Mammary epithelial cell (primary cell): ENCODE measurements at regions of chr11 and their contacts with region 1.

Region 1: DNA sequence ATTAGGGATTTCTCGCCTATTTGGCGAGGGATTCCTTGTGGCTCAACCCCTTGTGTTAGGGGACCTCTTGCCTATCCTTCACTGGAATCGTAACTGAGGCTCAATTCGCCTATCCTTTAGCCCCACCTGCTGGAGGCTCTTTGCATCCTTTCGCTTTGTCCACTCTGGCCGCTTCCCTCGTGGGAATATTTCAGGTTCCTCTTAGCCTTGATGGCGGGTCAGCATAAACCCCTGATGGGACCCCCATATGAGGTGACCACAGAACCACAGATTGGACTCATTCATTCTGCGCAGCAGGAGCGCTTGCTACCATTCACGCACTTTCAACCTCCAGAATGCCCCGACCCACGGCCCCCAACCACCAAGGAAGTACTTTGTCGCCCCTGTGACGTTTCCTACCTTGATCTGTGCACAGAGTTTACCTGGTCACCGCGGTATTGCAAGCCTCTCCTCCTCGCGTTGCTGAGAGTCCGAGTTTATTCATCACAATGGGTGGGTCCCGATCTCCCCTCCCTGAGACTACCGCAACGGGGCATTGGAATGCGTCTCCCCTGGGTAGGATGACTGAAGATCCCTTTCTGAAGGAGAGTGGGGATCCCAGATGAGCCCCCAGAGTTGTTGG is at the start of gene OR52N2:
- DNase-seq: peak; percentile 51
- H3K4me3 ChIP-seq: peak within 1 kb of the TSS; percentile 37 to 48 (median 46)
- H3K27ac ChIP-seq: no peak within 1 kb of the TSS
- H3K4me1 ChIP-seq: no peaks in the 10 kb centered on the region
- H3K27me3 ChIP-seq: peaks cover 4% of the 10 kb centered on the region
- CTCF ChIP-seq: peak; percentile 77 to 80
- total RNA-seq, gene OR52N2: not detected

Region 2: DNA sequence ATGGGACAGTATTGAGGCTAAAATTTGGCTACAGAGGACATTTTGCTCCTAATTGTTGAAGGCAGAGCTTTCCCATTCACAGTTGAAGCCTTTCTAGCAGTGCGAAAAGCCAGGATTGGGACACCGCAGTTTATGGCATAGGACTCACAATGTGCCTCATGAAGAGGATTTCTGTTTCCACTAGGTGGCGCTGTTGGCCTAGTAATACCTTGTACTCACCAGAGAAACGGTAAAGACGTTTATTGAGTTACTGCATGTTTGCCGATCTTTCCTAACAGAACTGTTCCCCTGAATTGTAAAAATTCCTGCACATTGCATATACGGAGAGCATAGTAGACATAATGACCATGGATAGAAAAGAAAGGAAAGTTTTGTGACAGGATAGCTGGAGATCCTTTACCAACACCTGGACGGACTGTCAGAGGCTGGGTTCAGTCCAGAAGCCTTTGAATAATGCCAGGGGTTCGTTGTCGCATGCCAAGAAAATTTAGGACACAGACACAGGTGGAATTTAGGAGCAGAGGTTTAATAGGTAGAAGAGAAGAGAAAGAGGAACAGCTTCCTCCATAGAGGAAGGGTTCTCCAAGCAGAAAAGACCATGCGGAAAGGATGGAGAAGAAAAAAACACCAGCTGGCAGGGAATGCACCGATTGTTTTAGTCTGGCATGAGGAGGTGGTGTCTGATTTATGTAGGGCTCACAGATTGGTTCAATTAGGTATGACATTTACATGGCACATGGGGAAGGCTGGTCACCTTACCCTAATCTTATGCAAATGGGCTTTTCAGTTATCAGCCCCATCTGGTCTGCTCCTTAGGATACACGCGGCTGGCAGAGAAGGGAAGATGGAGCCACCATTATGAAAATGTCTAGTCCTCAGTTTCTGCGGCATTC is 1182.2 kb before region 1 on chr11:
- CTCF ChIA-PET with region 1: no interaction called
- dilution Hi-C with region 1: no loop called
- in situ Hi-C with region 1: no loop called
- intact Hi-C with region 1: loop called (anchors 2 kb)
- DNase-seq: peak; percentile 63
- H3K4me3 ChIP-seq: no peak overlapping the region
- H3K27ac ChIP-seq: no peak overlapping the region
- H3K4me1 ChIP-seq: no peaks in the 10 kb centered on the region
- H3K27me3 ChIP-seq: no peaks in the 10 kb centered on the region
- CTCF ChIP-seq: peak; percentile 70 to 79

Region 3: GRCh38 chr11:5204787-5205186 is 603.8 kb before region 1 on chr11:
- CTCF ChIA-PET with region 1: no interaction called
- dilution Hi-C with region 1: no loop called
- in situ Hi-C with region 1: no loop called
- intact Hi-C with region 1: loop called (anchors 1 kb)
- DNase-seq: peak; percentile 58
- H3K4me3 ChIP-seq: no peak overlapping the region
- H3K27ac ChIP-seq: no peak overlapping the region
- H3K4me1 ChIP-seq: no peaks in the 10 kb centered on the region
- H3K27me3 ChIP-seq: no peaks in the 10 kb centered on the region
- CTCF ChIP-seq: peak; percentile 66 to 67

Region 4: DNA sequence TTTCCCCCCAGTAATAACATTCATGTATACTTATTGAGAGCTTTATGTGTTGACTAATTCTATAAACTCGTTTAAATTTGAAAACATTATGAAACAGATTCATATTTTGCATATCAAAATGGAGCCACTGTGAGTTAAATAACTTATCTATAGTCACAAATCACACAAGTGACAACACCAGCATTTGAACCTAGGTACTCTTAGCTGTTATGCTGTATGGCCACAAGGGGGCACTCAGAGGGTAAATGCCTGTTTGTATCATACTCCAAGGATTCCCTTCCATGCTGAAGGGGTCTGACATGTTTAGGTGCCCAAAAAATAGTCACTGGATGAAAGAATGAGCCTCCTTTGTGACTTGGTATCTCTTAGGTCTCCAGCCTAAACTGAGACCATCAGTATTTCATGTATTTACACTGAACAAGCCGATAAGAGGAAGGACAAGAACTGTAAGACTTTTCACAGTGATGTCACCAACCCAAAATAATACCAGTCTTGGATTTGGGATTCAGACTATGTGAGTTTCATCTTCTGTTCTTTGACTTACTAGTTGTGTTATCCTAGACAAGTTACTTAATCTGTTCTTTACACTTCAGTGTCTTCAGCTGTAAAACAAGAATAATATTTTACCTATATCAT is 332.3 kb before region 1 on chr11:
- CTCF ChIA-PET with region 1: no interaction called
- dilution Hi-C with region 1: no loop called
- in situ Hi-C with region 1: no loop called
- intact Hi-C with region 1: loop called (anchors 1 kb)
- DNase-seq: peak; percentile 27
- H3K4me3 ChIP-seq: no peak overlapping the region
- H3K27ac ChIP-seq: no peak overlapping the region
- H3K4me1 ChIP-seq: no peaks in the 10 kb centered on the region
- H3K27me3 ChIP-seq: peaks cover 3% of the 10 kb centered on the region
- CTCF ChIP-seq: peak; percentile 86 to 89

Region 5: DNA sequence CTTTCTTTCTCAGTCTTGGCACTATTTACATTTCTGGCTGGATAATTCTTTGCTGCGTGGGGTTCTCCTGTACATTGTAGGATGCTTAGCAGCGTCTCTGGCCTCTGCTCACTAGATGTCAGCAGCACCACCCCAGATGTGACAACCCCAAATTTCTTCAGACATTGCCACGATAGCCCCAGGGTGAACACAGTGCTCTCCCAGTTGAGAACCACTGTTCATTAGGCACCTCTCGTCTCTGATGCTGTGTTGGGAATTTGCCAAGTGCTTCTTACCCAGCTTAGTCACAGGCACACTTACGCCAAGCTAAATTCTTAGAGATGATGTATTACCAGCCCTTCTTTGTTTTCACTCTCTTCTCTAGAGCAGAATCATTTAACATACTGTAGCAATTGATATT is 202.8 kb before region 1 on chr11:
- CTCF ChIA-PET with region 1: no interaction called
- dilution Hi-C with region 1: no loop called
- in situ Hi-C with region 1: no loop called
- intact Hi-C with region 1: loop called (anchors 1 kb)
- DNase-seq: peak; percentile 85
- H3K4me3 ChIP-seq: no peak overlapping the region
- H3K27ac ChIP-seq: no peak overlapping the region
- H3K4me1 ChIP-seq: no peaks in the 10 kb centered on the region
- H3K27me3 ChIP-seq: no peaks in the 10 kb centered on the region
- CTCF ChIP-seq: peak in 1 of 2 donors; percentile 51

Region 6: DNA sequence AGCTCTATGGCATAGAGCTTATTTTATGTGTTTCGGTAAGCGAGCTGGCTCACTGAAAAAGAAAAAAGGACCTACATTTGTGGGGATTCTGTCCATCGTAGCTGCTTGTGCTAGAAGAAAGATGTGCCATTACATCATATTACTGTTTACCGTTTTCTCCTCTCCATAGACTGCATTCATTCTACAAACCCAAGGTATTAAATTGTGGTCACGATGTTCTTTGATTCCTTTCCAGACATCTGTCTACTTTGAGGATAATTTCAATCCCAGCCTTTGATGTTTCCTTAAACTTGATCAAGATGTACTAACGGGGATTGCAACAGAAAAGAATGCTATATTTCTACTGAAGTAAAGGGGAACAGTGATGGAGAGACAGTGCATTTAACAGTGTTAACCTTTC is 12.1 kb before region 1 on chr11:
- CTCF ChIA-PET with region 1: no interaction called
- dilution Hi-C with region 1: no loop called
- in situ Hi-C with region 1: no loop called
- intact Hi-C with region 1: no loop called
- DNase-seq: no peak
- H3K4me3 ChIP-seq: no peak overlapping the region
- H3K27ac ChIP-seq: no peak overlapping the region
- H3K4me1 ChIP-seq: no peaks in the 10 kb centered on the region
- H3K27me3 ChIP-seq: no peaks in the 10 kb centered on the region
- CTCF ChIP-seq: no peak

Region 7: DNA sequence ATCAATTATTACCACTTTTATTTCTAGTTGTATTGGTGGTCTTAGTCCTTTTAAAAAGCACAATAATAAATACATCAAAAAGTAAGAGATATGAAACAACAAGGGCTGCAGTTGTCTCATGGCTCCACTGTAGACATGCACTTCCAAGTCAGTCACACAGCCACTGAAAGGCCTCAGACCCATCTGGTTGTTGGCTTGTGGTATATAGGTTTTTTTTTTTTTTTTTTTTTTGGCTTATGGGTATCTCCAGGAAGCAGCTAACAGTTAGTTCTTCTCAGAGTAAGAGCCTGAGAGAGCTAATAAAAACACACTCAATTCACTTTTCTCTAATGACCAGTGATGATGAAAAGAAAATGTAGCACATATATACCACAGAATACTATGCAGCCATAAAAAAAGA is 39.1 kb after region 1 on chr11:
- CTCF ChIA-PET with region 1: no interaction called
- dilution Hi-C with region 1: no loop called
- in situ Hi-C with region 1: no loop called
- intact Hi-C with region 1: no loop called
- DNase-seq: no peak
- H3K4me3 ChIP-seq: no peak overlapping the region
- H3K27ac ChIP-seq: no peak overlapping the region
- H3K4me1 ChIP-seq: no peaks in the 10 kb centered on the region
- H3K27me3 ChIP-seq: no peaks in the 10 kb centered on the region
- CTCF ChIP-seq: no peak

Region 8: GRCh38 chr11:6353367-6353987 is 544.9 kb after region 1 on chr11:
- CTCF ChIA-PET with region 1: no interaction called
- dilution Hi-C with region 1: no loop called
- in situ Hi-C with region 1: no loop called
- intact Hi-C with region 1: loop called (anchors 10 kb)
- DNase-seq: peak; percentile 68
- H3K4me3 ChIP-seq: no peak overlapping the region
- H3K27ac ChIP-seq: no peak overlapping the region
- H3K4me1 ChIP-seq: peaks cover 11% of the 10 kb centered on the region
- H3K27me3 ChIP-seq: no peaks in the 10 kb centered on the region
- CTCF ChIP-seq: peak; percentile 85 to 98